Activated naive CD4-positive, alpha-beta T cell treated with anti-CD3 and anti-CD28 coated beads for 36 hours (primary cell): ENCODE measurements at regions of chr15 and their contacts with region 1.

Region 1: GRCh38 chr15:39782441-39783138 is at the start of gene FSIP1:
- DNase-seq: peak; percentile 98
- H3K4me3 Mint-ChIP-seq: peak within 1 kb of the TSS; percentile 77
- H3K27ac Mint-ChIP-seq: peak within 1 kb of the TSS; percentile 64
- H3K4me1 Mint-ChIP-seq: peaks cover 43% of the 10 kb centered on the region
- H3K27me3 Mint-ChIP-seq: no peaks in the 10 kb centered on the region
- total RNA-seq, gene FSIP1: 0.21 to 0.27 TPM

Region 2: DNA sequence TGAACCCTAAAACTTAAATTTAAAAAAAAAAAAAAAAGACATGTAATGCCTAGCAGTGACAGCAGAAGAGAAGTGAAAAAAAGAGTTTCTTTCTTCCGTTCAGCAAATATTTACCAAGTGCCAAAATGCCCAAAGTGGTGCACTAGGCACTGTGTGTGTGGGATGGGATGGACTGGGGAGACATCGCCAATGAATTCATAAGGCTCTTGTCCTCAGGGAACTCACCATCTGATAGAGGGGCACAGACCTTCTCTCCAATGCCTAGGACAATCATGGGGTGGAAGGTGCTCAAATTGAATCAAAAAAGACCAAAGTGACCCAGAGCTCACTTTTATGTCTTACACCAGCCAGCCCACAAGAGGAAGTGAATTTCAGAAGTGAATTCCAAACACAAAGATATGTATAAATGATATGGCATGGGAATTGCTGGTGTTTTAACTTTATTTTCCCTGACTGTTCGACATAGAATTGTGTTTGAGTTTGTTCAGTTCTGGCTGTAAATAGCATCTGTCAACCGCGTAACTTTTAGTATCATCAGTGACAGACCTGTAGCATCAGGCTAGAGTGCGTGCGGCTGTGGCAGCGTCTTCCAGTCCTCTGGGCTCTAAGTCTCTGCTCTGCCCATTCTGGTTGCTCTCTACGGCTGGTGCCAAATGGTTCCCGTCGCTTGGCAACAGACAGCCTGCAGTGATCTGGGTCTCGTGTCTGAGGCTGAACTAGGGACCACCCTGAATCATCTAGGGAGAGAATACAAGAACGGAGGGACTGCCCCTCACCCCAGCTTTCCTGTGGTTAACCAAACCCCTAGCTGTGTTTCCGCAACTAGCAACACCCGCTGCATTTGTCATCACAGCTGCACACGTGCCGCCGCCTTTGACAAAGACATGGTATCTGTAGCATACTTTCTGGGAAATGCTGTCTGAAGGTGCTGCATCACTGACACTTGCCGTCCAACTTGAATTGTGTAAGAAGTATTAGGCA is 355.7 kb before region 1 on chr15:
- CTCF ChIA-PET with region 1: no interaction called
- intact Hi-C with region 1: loop called (anchors 2 kb)
- DNase-seq: peak; percentile 95
- H3K4me3 Mint-ChIP-seq: peak overlapping the region; percentile 17
- H3K27ac Mint-ChIP-seq: no peak overlapping the region
- H3K4me1 Mint-ChIP-seq: peaks cover 38% of the 10 kb centered on the region
- H3K27me3 Mint-ChIP-seq: peaks cover 26% of the 10 kb centered on the region

Region 3: DNA sequence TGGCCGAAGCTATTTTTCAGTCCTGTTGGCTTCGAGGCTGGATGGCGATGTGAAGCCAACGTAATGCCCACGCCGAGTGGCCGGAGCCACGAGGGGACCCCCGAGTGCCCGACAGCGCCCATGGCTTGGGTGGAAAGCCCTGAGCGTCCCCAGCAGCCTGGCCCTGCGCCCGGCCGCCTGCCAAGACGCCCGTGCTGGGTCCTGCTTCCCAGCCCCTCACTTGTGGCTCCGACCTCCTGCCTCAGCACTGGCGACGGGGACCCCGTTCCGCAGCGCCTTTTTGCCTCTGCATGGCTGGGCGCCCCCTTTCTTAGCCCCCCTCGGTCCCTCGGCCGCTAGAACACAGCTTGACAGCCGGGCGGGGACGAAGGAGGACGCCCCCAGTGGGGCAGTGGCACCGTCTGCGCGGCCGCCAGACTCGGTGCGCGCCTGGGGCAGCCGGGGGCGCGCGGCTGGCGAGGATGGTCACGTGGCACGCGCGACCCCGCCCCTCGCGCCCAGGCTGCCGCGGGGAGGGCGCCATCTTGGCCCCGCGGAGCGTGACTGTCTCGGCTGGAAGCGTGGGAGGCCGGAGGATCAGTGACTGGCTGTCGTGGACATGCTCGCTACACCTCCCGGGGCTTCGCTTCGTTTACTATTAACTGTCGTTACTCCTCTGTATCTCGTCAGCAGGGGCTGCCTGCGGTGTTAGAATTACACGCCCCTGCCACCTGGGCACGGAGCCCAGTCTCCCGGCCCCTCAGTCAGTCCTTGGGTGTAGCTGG is 138.1 kb after region 1 on chr15:
- CTCF ChIA-PET with region 1: interaction called, 4 read pairs
- intact Hi-C with region 1: loop called (anchors 1 kb)
- DNase-seq: peak; percentile 87
- H3K4me3 Mint-ChIP-seq: peak overlapping the region; percentile 84
- H3K27ac Mint-ChIP-seq: peak overlapping the region; percentile 65
- H3K4me1 Mint-ChIP-seq: peaks cover 17% of the 10 kb centered on the region
- H3K27me3 Mint-ChIP-seq: peaks cover 20% of the 10 kb centered on the region

Region 4: GRCh38 chr15:40038638-40039543 is 256.3 kb after region 1 on chr15 and contains the start of gene SRP14:
- CTCF ChIA-PET with region 1: interaction called, 4 read pairs
- intact Hi-C with region 1: loop called (anchors 1 kb)
- DNase-seq: peak; percentile 97
- H3K4me3 Mint-ChIP-seq: peak within 1 kb of the TSS; percentile 91
- H3K27ac Mint-ChIP-seq: peak within 1 kb of the TSS; percentile 92
- H3K4me1 Mint-ChIP-seq: peaks cover 37% of the 10 kb centered on the region
- H3K27me3 Mint-ChIP-seq: no peaks in the 10 kb centered on the region
- total RNA-seq, gene SRP14: 185 to 198 TPM

Region 5: DNA sequence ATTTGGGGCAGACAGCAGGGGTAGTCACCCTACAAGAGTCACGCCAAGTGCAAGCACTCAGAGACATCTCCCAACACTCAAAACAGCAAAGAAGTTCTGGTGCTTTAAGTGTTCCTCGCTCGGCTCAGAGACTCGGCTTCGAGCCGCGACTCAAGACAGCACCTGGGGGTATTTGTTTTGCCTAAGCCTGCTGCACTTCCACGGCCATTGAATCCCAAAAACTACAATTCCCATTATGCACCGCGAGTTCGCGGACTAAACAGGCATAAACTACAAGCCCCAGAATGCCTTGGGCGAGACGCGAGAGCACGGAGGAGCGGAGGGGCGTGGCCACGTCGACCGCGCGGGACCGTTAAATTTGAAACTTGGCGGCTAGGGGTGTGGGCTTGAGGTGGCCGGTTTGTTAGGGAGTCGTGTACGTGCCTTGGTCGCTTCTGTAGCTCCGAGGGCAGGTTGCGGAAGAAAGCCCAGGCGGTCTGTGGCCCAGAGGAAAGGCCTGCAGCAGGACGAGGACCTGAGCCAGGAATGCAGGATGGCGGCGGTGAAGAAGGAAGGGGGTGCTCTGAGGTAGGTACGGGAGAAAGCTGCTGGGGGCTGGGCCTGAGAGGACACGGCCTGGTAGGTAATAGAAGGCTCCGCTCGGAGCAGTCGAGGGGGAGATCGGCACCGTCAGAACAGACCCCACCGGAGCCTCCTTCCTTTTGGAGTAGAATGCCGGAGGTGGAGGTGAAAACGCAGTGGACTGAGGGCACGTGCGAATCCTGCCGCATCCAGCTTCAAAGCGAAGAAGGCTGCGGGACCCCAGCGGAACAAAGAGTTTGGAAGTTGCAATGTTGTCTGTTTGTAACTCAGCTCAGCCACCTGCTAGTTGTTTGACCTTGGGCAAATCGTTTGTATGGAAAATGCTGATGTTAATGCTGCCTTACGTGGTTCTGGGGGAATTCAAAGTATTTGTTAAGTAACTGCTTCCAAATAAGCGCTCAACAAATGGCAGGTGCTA is 378.4 kb after region 1 on chr15 and contains the start of gene BUB1B:
- CTCF ChIA-PET with region 1: interaction called, 3 read pairs
- intact Hi-C with region 1: loop called (anchors 1 kb)
- DNase-seq: peak; percentile 96
- H3K4me3 Mint-ChIP-seq: no peak within 1 kb of the TSS
- H3K27ac Mint-ChIP-seq: no peak within 1 kb of the TSS
- H3K4me1 Mint-ChIP-seq: peaks cover 6% of the 10 kb centered on the region
- H3K27me3 Mint-ChIP-seq: no peaks in the 10 kb centered on the region
- total RNA-seq, gene BUB1B: 102 to 106 TPM